ENCODE measurements at regions of chr4 and their contacts with region 1.

Region 1: DNA sequence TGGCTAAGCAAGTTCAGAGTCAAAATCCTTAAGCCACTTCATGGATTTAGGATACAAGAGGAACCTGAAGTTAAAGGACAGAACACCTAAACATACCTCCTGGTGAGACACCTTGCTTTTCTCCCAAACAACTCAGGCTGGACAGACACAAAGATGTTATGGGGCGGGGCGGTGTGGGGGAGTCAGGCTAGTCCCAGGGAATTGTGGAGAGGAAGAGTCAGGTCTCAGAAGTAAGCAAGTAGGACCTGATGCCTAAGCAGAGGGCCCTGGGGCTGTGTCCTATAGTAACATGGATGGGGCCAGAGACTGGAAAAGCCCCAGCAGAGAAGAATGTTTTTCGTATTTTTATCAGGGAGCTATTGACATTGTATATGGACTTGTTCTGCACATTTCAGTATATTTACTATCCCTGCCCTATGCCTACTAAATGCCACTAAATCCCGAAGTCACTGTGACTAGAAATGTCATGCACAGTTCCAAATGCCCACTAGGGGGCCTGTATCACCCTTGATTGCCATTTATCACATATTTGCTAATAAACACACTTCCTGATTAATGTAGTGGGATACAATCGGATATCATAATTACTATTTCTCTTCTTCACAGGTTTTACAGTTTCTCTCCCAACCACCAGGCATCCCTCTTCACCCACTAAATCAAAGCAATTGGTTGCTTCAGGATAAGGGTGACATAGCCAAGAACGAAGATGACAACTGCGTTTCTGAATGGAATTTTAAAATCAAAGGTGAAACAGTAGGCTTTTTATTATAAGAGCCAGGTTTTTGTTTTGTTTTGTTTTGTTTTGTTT is 23.8 kb upstream of the ARHGAP10 start:
- DNase-seq: no peak
- H3K4me3 ChIP-seq: no peak overlapping the region
- H3K27ac ChIP-seq: no peak overlapping the region
- H3K4me1 ChIP-seq: peaks cover 5% of the 10 kb centered on the region
- H3K27me3 ChIP-seq: no peaks in the 10 kb centered on the region
- CTCF ChIP-seq: peak; percentile 78 to 96 (median 84)
- POLR2A ChIP-seq: no peak

Region 2: GRCh38 chr4:147866532-147867271 is 158.6 kb after region 1 on chr4:
- intact Hi-C with region 1: loop called (anchors 2 kb)
- DNase-seq: no peak
- H3K4me3 ChIP-seq: no peak overlapping the region
- H3K27ac ChIP-seq: no peak overlapping the region
- H3K4me1 ChIP-seq: peaks cover 30% of the 10 kb centered on the region
- H3K27me3 ChIP-seq: no peaks in the 10 kb centered on the region
- CTCF ChIP-seq: peak; percentile 98 to 100 (median 100)
- POLR2A ChIP-seq: no peak

Region 3: DNA sequence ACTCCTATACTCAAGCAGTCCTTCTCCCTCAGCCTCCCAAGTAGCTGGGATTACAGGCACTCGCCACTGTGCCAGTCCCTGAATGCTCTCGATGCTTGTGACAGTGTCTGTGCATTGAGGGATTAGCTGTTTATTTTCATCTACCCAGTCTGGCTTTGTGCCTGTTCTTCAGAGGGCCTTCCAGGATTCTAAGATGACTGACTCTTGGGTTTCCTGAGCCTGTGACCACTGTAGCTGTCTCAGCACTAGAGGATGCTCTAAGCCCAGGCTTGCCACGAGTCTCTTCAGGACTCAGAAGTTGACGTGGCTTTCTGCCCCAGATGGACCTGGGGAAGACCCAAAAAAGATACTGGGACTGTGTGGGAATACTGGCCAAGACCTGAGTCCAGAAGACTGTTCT is 225.2 kb after region 1 on chr4:
- intact Hi-C with region 1: no loop called
- DNase-seq: no peak
- H3K4me3 ChIP-seq: no peak overlapping the region
- H3K27ac ChIP-seq: no peak overlapping the region
- H3K4me1 ChIP-seq: peaks cover 6% of the 10 kb centered on the region
- H3K27me3 ChIP-seq: no peaks in the 10 kb centered on the region
- CTCF ChIP-seq: no peak
- POLR2A ChIP-seq: no peak

Measured in vagina (tissue), 2 donors.